ENCODE measurements at regions of chr13 and their contacts with region 1.

Region 1: DNA sequence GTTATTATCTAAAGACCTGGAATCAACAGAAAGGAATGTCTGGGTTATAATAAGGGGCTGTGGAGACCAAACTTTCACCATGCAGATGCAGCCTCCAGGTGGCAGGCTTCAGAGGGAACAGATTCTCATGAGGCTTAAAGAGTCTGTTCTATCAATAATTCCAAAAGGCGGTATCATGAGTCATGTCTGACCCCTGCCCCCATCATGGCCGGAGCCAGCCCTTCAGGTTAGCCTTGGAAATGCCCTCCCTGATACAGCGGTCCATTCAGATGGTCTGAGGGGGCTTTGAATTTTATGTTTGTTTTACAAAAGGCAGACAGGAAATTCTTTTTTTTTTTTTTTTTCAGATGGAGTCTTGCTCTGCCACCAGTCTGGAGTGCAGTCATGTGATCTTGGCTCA is 21.7 kb upstream of the LAMP1 start:
- DNase-seq: no peak
- ATAC-seq: peak in 5 of 8 donors; percentile 52 to 68 (median 56)
- H3K4me3 ChIP-seq: no peak overlapping the region
- H3K27ac ChIP-seq: no peak overlapping the region
- H3K4me1 ChIP-seq: peaks cover 0 to 30% (median 0%) of the 10 kb centered on the region in 9 donors
- H3K27me3 ChIP-seq: no peaks in the 10 kb centered on the region
- CTCF ChIP-seq: peak in 8 of 9 donors; percentile 9 to 59 (median 53)

Region 2: DNA sequence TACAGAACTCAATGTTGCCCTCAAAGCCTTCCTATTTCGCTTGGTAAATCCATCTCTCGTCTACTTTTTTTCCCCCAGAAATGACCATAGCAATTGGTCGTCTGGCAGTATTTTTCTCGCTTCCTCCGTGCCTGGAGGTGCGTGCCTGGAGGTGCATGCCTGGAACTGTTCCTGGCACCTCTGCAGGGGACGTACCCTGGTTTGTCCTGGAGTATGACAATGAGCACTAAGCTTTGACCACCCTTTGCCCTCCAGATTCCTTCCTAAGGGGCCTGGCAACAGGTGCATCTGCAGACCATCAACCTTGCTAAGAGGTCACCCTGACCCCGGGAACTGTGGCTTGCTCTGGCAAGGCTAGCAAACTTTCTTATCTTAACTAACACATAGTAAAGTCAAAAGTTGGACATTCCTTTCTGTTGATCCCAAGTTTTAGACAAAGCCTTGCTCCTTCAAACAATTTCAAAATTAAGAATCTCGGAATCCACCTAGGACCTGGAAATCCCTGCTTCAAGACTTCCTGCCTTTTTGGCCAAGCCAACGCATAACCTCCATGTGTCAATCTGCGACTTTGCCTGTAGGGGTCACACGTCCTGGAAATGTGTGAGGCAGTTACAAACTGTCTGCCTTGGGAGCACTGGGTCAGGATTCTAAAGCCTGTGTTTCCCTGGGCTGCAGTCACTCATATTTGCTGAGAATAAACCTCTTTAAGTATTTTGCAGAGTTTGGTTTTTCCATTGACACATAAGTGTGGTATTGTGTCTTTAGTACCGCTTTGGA is 658.6 kb before region 1 on chr13:
- intact Hi-C with region 1: loop called in 1 of 10 experiments (anchors 5 kb)
- DNase-seq: peak in 1 of 2 donors; percentile 22
- ATAC-seq: peak in 7 of 8 donors; percentile 32 to 69 (median 55)
- H3K4me3 ChIP-seq: no peak overlapping the region
- H3K27ac ChIP-seq: no peak overlapping the region
- H3K4me1 ChIP-seq: peaks cover 0 to 7% (median 0%) of the 10 kb centered on the region in 9 donors
- H3K27me3 ChIP-seq: peaks cover 0 to 12% (median 0%) of the 10 kb centered on the region in 7 donors
- CTCF ChIP-seq: peak; percentile 18 to 72 (median 63)

Region 3: GRCh38 chr13:113327766-113328471 is 52.5 kb after region 1 on chr13:
- intact Hi-C with region 1: no loop called
- DNase-seq: peak in 1 of 2 donors; percentile 13
- ATAC-seq: peak; percentile 57 to 89 (median 70)
- H3K4me3 ChIP-seq: no peak overlapping the region
- H3K27ac ChIP-seq: peak overlapping the region in 8 of 10 donors; percentile 26 to 72 (median 55)
- H3K4me1 ChIP-seq: peaks cover 0 to 14% (median 0%) of the 10 kb centered on the region in 9 donors
- H3K27me3 ChIP-seq: no peaks in the 10 kb centered on the region
- CTCF ChIP-seq: no peak

Region 4: GRCh38 chr13:113374511-113375175 is 99.3 kb after region 1 on chr13:
- intact Hi-C with region 1: loop called in 1 of 10 experiments (anchors 5 kb)
- DNase-seq: no peak
- ATAC-seq: no peak
- H3K4me3 ChIP-seq: no peak overlapping the region
- H3K27ac ChIP-seq: no peak overlapping the region
- H3K4me1 ChIP-seq: no peaks in the 10 kb centered on the region
- H3K27me3 ChIP-seq: peaks cover 0 to 11% (median 0%) of the 10 kb centered on the region in 7 donors
- CTCF ChIP-seq: no peak

Region 5: DNA sequence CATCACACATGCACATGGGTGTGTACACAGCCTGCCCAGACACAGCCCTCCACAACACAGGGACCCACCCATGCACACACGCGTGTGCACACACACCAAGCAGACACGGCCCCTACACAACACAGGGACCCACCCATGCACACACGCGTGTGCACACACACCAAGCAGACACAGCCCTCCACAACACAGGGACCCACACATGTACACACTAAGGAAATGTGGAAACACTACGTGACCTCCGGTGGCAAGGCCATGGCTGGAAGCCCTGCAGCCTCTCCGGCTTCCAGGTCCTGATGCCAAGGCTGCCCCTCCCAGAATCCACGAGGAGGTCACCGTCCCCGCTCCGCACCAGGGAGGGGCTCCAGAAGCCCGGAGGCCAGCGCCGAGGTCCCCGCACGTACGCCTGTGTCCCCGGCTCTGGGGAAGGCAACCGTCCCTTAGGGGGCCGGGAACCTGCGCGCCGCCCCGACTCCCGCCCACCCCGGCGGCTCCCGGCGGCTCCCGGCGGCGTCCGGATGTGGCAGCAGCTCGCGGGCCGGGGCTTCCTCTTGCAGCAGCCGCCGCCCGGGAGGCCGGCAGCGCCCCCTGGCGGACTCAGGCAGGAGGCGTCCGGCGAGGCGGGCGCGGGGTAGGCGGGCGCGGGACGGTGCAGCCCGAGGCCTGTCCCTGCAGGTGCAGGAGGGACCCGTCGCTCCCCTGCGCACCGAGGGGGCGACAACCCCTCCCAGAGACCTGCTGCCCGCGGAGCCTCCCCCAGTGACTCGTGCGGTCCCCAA is 118.4 kb after region 1 on chr13:
- intact Hi-C with region 1: loop called in 9 of 10 experiments (anchors 5 to 10 kb)
- DNase-seq: peak; percentile 67 to 84
- ATAC-seq: peak; percentile 77 to 93 (median 85)
- H3K4me3 ChIP-seq: peak overlapping the region; percentile 68 to 97 (median 81)
- H3K27ac ChIP-seq: peak overlapping the region in 9 of 10 donors; percentile 64 to 87 (median 81)
- H3K4me1 ChIP-seq: peaks cover 0 to 28% (median 11%) of the 10 kb centered on the region in 9 donors
- H3K27me3 ChIP-seq: no peaks in the 10 kb centered on the region
- CTCF ChIP-seq: peak; percentile 77 to 98 (median 89)

Region 6: GRCh38 chr13:113405481-113406300 is 130.3 kb after region 1 on chr13:
- intact Hi-C with region 1: no loop called
- DNase-seq: no peak
- ATAC-seq: no peak
- H3K4me3 ChIP-seq: no peak overlapping the region
- H3K27ac ChIP-seq: peak overlapping the region in 9 of 10 donors; percentile 58 to 96 (median 79)
- H3K4me1 ChIP-seq: peaks cover 7 to 81% (median 41%) of the 10 kb centered on the region in 9 donors
- H3K27me3 ChIP-seq: peaks cover 0 to 18% (median 10%) of the 10 kb centered on the region in 7 donors
- CTCF ChIP-seq: no peak

Region 7: DNA sequence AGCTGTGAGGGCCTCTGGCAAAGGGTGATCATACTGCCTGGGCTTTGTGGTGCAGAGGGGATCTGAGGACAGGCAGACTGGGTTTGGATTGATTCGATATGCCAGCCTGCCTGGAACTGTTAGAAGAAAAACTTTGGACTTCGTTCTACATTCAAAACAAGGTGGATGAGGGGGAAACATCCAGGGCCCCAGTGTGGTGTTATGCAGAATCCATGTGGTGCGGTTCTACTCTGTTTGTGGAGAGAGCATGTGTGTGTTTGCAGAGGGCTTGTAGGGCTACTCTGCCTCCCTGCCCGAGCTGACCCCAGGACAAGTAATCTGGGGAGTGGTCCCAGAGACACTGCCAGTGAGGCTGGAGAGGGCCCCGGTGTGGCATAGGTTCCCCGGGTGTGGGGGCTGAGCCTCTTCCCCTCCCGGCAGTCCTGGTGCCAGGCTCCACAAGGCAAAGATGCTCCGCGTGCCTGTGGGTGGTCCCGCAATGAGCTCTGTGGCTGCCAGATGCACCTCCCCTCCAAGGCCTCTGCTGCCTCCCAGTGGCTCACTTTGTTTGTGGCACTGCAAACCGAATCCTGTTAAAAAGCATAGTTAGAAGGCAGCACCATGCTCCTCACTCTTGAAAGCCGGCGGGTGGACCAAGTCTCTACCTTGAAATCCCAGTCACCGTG is 286.8 kb after region 1 on chr13:
- intact Hi-C with region 1: loop called in 1 of 10 experiments (anchors 5 kb)
- DNase-seq: peak; percentile 63 to 64
- ATAC-seq: peak; percentile 48 to 81 (median 77)
- H3K4me3 ChIP-seq: no peak overlapping the region
- H3K27ac ChIP-seq: no peak overlapping the region
- H3K4me1 ChIP-seq: peaks cover 0 to 7% (median 0%) of the 10 kb centered on the region in 9 donors
- H3K27me3 ChIP-seq: peaks cover 0 to 8% (median 0%) of the 10 kb centered on the region in 7 donors
- CTCF ChIP-seq: peak; percentile 44 to 82 (median 77)

Region 8: DNA sequence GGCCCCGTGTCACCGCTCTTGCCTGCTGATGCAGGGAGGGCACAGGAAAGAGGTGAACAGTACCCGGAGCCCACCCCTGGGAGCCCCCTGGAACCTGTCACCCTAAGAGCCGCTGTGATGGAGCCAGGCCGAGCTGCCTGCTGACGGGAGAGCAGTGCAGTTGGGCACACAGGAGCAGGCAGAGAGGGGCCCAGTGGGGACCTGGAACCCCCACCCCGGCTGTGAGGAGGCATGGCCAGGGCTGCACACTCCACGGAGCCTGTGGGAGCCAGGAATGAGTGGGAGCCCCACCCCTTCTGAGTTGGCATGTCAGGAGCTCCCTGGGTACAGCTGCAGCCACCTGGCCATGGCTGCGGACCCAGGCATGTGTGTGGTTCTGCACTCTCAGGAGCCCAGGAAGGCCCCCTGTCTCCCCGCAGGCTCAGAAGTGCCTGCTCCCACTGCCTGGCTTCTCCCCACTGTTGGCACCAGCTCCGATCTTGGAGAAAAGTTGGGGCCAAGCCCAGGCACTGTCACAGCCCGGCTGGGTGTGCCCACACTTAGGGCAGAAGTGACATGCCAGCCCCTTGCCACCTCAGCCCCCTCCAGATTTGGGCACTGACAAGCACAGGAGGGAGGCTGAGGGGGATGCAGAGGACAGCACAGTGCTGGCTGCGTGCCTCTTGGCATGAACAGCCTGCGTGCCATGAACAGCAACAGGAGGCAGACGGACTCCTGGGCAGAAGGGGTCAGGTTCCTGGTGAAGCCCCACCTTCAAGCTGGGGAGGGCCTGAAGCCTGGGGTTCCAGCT is 910.0 kb after region 1 on chr13:
- intact Hi-C with region 1: no loop called
- DNase-seq: peak; percentile 24 to 58
- ATAC-seq: peak; percentile 46 to 96 (median 90)
- H3K4me3 ChIP-seq: no peak overlapping the region
- H3K27ac ChIP-seq: peak overlapping the region in 1 of 10 donors; percentile 10
- H3K4me1 ChIP-seq: no peaks in the 10 kb centered on the region
- H3K27me3 ChIP-seq: peaks cover 0 to 5% (median under 1%) of the 10 kb centered on the region in 7 donors
- CTCF ChIP-seq: no peak